Naive thymus-derived CD4-positive, alpha-beta T cell (primary cell): ENCODE measurements at regions of chr2 and their contacts with region 1.

Region 1: DNA sequence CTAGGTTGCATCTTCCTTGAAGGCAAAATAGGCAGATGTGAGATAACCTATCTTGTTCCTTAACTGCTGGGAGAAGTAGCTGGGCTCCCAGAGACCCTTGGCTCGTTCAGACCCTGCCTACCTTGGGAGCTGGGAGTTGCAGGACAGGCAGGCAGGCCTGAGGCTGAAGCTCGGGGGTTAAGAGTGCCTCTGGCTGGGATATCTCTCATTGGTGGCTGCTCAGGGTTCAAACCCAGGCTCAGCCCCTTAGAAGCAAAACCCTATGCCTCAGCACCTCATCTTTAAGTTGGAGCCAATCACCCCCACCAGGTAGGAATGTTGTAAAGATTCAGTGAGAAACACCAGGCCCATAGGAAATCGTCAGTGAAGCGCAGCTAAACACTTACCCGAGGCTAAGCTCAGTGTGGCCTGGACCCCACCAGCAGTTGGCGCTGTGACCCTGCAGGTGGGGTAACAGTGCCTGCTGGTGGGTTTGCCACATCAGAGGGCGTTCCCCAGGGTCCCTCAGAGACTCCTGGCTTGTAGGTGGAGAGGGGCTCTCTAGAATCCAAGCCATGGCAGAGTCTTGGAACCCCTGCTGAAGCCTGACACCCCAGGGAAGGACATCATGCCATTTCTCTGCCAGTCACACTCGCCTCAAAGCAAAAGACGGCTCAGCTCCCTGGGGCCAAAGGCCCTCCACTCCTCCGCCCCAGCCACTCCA is 54.6 kb upstream of the GPR17 start:
- DNase-seq: peak; percentile 42 to 79 (median 67)
- ATAC-seq: peak; percentile 92
- H3K4me3 ChIP-seq: no peak overlapping the region
- H3K4me3 Mint-ChIP-seq: no peak overlapping the region
- H3K27ac ChIP-seq: no peak overlapping the region
- H3K27ac Mint-ChIP-seq: peak overlapping the region in 5 of 9 donors; percentile 18 to 69 (median 36)
- H3K4me1 ChIP-seq: no peaks in the 10 kb centered on the region
- H3K4me1 Mint-ChIP-seq: peaks cover 0 to 17% (median 4%) of the 10 kb centered on the region in 7 donors
- H3K27me3 ChIP-seq: no peaks in the 10 kb centered on the region
- H3K27me3 Mint-ChIP-seq: no peaks in the 10 kb centered on the region

Region 2: DNA sequence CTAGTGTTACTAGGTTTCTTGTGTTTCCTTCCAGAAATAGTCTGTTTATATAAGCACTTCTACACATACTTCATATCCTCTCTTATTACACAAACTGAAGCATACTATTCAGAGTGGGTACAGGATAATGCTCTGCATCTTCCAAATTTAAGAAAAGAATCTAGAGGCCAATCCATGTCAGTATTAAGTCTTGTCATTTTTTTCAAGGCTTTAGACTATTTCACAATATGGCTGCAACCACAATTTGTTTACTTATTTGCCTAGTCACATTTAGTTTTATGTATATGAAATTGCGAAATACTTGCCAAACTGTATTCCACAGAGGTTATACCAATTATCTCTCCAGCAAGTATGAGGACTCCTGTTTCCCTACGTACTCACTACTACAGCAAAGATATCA is 93.0 kb before region 1 on chr2:
- CTCF ChIA-PET with region 1: no interaction called
- POLR2A ChIA-PET with region 1: no interaction called
- intact Hi-C with region 1: no loop called
- DNase-seq: no peak
- ATAC-seq: no peak
- H3K4me3 ChIP-seq: no peak overlapping the region
- H3K4me3 Mint-ChIP-seq: no peak overlapping the region
- H3K27ac ChIP-seq: no peak overlapping the region
- H3K27ac Mint-ChIP-seq: peak overlapping the region in 7 of 9 donors; percentile 1 to 62 (median 39)
- H3K4me1 ChIP-seq: no peaks in the 10 kb centered on the region
- H3K4me1 Mint-ChIP-seq: peaks cover 0 to 15% (median 3%) of the 10 kb centered on the region in 7 donors
- H3K27me3 ChIP-seq: no peaks in the 10 kb centered on the region
- H3K27me3 Mint-ChIP-seq: no peaks in the 10 kb centered on the region

Region 3: GRCh38 chr2:127615501-127616166 is 24.3 kb after region 1 on chr2:
- CTCF ChIA-PET with region 1: interaction called, 6 read pairs
- POLR2A ChIA-PET with region 1: interaction called, 3 read pairs
- intact Hi-C with region 1: loop called in 1 of 2 experiments (anchors 2 kb)
- DNase-seq: peak in 2 of 9 donors; percentile 16 to 31
- ATAC-seq: no peak
- H3K4me3 ChIP-seq: no peak overlapping the region
- H3K4me3 Mint-ChIP-seq: peak overlapping the region in 9 of 10 donors; percentile 22 to 75 (median 58)
- H3K27ac ChIP-seq: no peak overlapping the region
- H3K27ac Mint-ChIP-seq: peak overlapping the region in 7 of 9 donors; percentile 15 to 81 (median 49)
- H3K4me1 ChIP-seq: peaks cover 0 to 6% of the 10 kb centered on the region in 2 donors
- H3K4me1 Mint-ChIP-seq: peaks cover 8 to 36% (median 31%) of the 10 kb centered on the region in 7 donors
- H3K27me3 ChIP-seq: no peaks in the 10 kb centered on the region
- H3K27me3 Mint-ChIP-seq: peaks cover 0 to 21% (median 0%) of the 10 kb centered on the region in 5 donors

Region 4: DNA sequence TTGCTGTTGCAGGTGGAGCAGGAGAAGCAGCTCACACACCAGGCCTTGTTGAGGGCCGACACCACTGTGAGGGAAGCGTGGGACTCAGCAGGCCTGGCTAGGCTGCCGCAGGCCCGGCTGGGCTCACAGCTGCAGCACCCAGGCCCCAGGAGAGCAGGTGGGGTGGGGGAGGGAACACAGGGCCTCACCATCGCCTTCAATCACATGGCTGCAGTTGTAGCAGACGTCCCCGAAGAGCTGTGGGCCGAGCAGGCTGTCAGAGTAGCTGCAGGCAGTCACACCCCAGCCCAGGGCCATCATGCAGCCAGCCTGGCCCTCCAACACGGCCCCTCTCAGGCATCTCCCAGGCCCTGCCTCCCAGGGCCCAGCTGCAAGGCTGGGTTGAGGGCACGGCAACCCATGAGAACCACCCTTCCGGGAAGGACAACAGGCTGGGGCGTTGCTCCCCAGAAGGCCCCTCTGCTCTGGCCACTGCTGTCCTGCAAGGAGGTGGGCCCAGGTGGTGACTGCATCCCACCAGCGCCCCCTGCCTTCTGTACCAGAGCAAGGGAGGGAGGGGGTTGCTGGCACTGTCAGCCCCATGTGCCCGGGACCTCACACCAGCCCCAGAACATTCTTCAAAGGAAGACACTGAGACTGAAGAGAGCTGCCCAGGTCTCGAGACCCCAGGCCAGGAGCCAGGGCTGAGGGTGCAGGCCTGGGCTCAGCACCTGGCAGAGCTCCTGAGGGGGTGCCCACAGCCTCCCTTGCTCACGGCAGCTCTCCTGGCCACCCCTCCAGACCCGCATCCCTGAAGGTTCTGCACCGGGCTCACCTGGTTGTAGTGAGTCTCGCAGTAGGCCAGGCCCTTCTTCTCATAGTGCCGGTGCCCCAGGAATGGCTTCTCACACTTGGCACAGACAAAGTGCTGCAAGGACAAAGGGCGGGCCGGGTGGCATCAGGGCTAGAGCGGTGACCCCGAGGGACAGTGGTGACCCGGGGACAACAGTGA is 49.0 kb after region 1 on chr2:
- CTCF ChIA-PET with region 1: interaction called, 14 read pairs
- POLR2A ChIA-PET with region 1: interaction called, 8 read pairs
- intact Hi-C with region 1: no loop called
- DNase-seq: peak in 6 of 9 donors; percentile 30 to 38 (median 35)
- ATAC-seq: peak; percentile 2
- H3K4me3 ChIP-seq: peak overlapping the region; percentile 64
- H3K4me3 Mint-ChIP-seq: peak overlapping the region; percentile 53 to 85 (median 78)
- H3K27ac ChIP-seq: peak overlapping the region; percentile 78
- H3K27ac Mint-ChIP-seq: peak overlapping the region; percentile 80 to 96 (median 93)
- H3K4me1 ChIP-seq: peaks cover 3 to 77% of the 10 kb centered on the region in 2 donors
- H3K4me1 Mint-ChIP-seq: peaks cover 14 to 89% (median 66%) of the 10 kb centered on the region in 7 donors
- H3K27me3 ChIP-seq: no peaks in the 10 kb centered on the region
- H3K27me3 Mint-ChIP-seq: no peaks in the 10 kb centered on the region